ENCODE measurements at regions of chrX and their contacts with region 1.

Region 1: GRCh38 chrX:14095702-14096101 is 66.0 kb upstream of the GEMIN8 start:
- DNase-seq: peak; percentile 19
- ATAC-seq: peak; percentile 46 to 50

Region 2: GRCh38 chrX:13598877-13599276 is 496.8 kb before region 1 on chrX:
- intact Hi-C with region 1: no loop called
- DNase-seq: no peak
- ATAC-seq: no peak

Region 3: DNA sequence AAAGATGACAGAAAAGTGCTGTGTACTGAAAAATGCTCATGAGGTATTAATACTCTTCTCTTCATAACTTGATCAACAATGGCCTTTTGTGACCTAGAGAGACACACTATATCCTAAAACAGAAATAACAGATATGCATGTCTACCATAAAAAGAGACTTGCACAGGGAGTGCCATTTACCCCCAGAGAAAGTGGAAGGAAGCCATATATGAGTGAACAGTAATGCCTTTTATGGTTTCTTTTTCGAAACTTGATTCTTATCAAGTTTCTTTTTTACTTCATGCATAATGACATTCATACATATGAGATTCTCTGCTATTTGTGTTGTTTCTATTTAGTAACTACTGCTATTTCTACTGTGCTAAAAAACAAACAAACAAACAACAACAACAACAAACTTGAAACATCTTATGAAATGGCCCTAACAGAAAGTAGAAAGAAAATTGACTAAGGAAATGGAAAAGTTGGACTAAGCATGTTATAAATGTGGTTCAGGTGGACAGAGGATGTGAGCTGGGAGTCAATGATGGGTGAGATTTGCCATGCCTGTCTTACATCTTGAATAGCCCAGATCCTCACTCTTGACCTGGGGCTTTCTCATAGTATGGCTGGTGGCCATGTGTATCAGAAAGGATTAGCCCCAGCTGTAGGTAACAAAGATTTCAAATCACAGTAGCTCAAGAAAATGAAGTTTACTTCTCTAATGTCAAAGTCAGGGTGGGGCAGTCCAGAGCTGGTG is 109.8 kb before region 1 on chrX:
- intact Hi-C with region 1: no loop called
- DNase-seq: no peak
- ATAC-seq: no peak

Region 4: GRCh38 chrX:14274691-14275090 is 179.0 kb after region 1 on chrX:
- intact Hi-C with region 1: no loop called
- DNase-seq: no peak
- ATAC-seq: no peak

Region 5: DNA sequence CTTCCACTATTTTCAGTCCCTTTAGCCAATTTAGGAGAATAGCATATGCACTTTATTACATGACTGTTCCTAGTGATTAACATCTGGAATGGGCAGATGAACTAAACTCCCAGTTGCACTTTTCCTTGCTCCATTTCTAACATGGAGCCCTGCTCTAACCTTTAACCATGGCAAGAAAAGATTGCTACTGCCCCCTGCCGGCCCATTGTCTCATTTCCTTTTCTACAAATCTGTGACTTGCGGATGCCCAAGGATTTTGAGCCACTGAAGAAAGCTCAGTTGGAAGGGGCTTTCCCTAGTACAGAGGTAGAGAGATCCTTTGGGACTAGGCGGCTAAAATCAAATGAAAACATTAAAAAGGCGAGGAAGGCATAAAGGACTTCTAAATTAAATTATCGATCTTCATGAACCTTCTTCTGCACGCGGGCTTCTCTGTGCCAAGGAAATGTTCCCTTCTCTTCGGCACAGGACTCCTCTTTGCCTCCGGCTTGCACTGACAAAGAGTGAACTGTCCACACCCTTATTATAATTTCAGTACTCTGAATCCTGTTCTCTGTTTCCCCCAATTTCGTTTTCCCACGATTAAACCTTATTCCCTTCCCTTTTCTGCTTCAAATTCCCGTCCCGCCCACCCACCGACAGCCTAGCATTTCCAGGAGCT is 433.1 kb after region 1 on chrX:
- intact Hi-C with region 1: loop called in 1 of 2 experiments (anchors 10 kb)
- DNase-seq: peak; percentile 33
- ATAC-seq: peak; percentile 16 to 27

Region 6: DNA sequence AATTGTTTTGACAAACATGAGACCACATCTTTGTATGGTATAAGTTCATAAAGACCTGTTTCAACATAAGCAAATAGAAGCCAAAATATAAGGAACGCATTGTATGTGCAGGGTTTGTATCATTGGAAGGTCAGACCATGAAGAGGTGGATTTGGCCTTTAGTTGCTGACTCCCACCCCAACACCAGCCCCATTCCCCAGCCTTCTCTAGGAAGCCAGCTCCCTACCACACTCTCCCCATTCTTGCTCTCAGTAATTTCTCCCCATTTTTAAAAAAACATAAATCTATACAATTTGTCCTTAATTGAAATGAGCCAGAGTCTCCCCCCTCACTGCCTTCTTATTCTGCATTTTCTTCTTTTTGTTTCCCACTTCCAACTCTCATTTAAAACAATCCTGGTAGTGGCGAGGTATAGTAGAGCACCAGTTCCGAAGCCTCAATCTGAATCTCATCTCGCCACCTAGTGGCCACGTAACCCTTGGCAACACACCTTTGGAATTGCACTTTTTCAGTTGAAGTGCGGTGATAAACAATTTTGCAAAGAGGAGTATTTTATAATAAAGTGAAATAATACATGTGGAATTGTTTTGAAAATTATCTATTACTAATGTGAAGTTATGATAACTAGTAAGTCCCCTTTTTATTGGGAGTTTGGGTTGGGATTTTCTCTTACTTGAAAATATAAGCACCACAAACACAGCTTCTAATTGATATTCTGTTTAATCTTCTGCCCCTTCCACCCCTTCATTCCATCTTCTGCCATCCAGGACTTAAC is 1047.5 kb after region 1 on chrX:
- intact Hi-C with region 1: loop called (anchors 5 kb)
- DNase-seq: peak; percentile 44
- ATAC-seq: peak in 1 of 2 donors; percentile 47